CD4-positive, alpha-beta T cell (primary cell): ENCODE measurements at regions of chr21 and their contacts with region 1.

Region 1: GRCh38 chr21:33542640-33543504 is at the start of gene SON:
- DNase-seq: peak; percentile 94 to 99 (median 96)
- ATAC-seq: peak; percentile 89
- H3K4me3 ChIP-seq: peak within 1 kb of the TSS; percentile 91
- H3K4me3 Mint-ChIP-seq: peak within 1 kb of the TSS; percentile 95
- H3K27ac ChIP-seq: peak within 1 kb of the TSS; percentile 99 to 100
- H3K27ac Mint-ChIP-seq: peak within 1 kb of the TSS; percentile 98
- H3K4me1 ChIP-seq: peaks cover 15% of the 10 kb centered on the region
- H3K4me1 Mint-ChIP-seq: peaks cover 53% of the 10 kb centered on the region
- H3K27me3 ChIP-seq: no peaks in the 10 kb centered on the region
- H3K27me3 Mint-ChIP-seq: no peaks in the 10 kb centered on the region
- CTCF ChIP-seq: no peak
- total RNA-seq, gene SON: 420 to 438 TPM

Region 2: GRCh38 chr21:32727687-32728455 is 815.0 kb before region 1 on chr21 and contains the start of gene SYNJ1:
- CTCF ChIA-PET with region 1: no interaction called
- POLR2A ChIA-PET with region 1: interaction called, 12 read pairs
- intact Hi-C with region 1: loop called in 1 of 2 experiments (anchors 5 kb)
- DNase-seq: peak; percentile 85 to 97 (median 92)
- ATAC-seq: peak; percentile 85
- H3K4me3 ChIP-seq: peak within 1 kb of the TSS; percentile 95
- H3K4me3 Mint-ChIP-seq: peak within 1 kb of the TSS; percentile 97
- H3K27ac ChIP-seq: peak within 1 kb of the TSS; percentile 72 to 81
- H3K27ac Mint-ChIP-seq: peak within 1 kb of the TSS; percentile 90
- H3K4me1 ChIP-seq: peaks cover 27% of the 10 kb centered on the region
- H3K4me1 Mint-ChIP-seq: peaks cover 75% of the 10 kb centered on the region
- H3K27me3 ChIP-seq: no peaks in the 10 kb centered on the region
- H3K27me3 Mint-ChIP-seq: no peaks in the 10 kb centered on the region
- CTCF ChIP-seq: no peak
- total RNA-seq, gene SYNJ1: 14.3 to 15.6 TPM

Region 3: GRCh38 chr21:33324291-33325221 is 218.3 kb before region 1 on chr21 and contains the start of gene IFNAR1:
- CTCF ChIA-PET with region 1: no interaction called
- POLR2A ChIA-PET with region 1: interaction called, 13 read pairs
- intact Hi-C with region 1: no loop called
- DNase-seq: peak; percentile 98 to 100 (median 99)
- ATAC-seq: peak; percentile 87
- H3K4me3 ChIP-seq: peak within 1 kb of the TSS; percentile 90
- H3K4me3 Mint-ChIP-seq: no peak within 1 kb of the TSS
- H3K27ac ChIP-seq: peak within 1 kb of the TSS; percentile 95 to 99
- H3K27ac Mint-ChIP-seq: no peak within 1 kb of the TSS
- H3K4me1 ChIP-seq: peaks cover 29% of the 10 kb centered on the region
- H3K4me1 Mint-ChIP-seq: peaks cover 31% of the 10 kb centered on the region
- H3K27me3 ChIP-seq: no peaks in the 10 kb centered on the region
- H3K27me3 Mint-ChIP-seq: no peaks in the 10 kb centered on the region
- CTCF ChIP-seq: no peak
- total RNA-seq, gene IFNAR1: 20.4 to 26.8 TPM

Region 4: DNA sequence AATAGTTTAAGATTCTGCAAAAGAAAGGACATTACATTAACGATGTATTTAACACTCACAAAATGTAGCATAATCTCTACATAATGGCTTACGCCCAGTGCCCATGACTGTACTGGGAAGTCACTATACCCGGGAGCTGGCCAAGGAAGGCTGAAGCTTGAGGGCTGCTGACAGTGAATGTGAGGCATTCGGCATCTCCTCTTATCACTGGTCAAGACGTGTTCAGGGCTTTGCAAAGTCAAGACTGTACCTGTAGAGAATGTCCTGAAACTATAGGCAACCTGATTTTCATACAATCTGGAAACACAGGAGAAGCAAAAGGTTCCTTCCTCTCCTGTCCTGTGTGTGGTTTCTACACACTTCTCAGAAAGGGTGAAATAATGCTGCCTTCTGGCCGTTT is 152.4 kb before region 1 on chr21:
- CTCF ChIA-PET with region 1: no interaction called
- POLR2A ChIA-PET with region 1: no interaction called
- intact Hi-C with region 1: no loop called
- DNase-seq: no peak
- ATAC-seq: no peak
- H3K4me3 ChIP-seq: no peak overlapping the region
- H3K4me3 Mint-ChIP-seq: no peak overlapping the region
- H3K27ac ChIP-seq: no peak overlapping the region
- H3K27ac Mint-ChIP-seq: no peak overlapping the region
- H3K4me1 ChIP-seq: peaks cover 3% of the 10 kb centered on the region
- H3K4me1 Mint-ChIP-seq: peaks cover 3% of the 10 kb centered on the region
- H3K27me3 ChIP-seq: no peaks in the 10 kb centered on the region
- H3K27me3 Mint-ChIP-seq: no peaks in the 10 kb centered on the region
- CTCF ChIP-seq: no peak

Region 5: DNA sequence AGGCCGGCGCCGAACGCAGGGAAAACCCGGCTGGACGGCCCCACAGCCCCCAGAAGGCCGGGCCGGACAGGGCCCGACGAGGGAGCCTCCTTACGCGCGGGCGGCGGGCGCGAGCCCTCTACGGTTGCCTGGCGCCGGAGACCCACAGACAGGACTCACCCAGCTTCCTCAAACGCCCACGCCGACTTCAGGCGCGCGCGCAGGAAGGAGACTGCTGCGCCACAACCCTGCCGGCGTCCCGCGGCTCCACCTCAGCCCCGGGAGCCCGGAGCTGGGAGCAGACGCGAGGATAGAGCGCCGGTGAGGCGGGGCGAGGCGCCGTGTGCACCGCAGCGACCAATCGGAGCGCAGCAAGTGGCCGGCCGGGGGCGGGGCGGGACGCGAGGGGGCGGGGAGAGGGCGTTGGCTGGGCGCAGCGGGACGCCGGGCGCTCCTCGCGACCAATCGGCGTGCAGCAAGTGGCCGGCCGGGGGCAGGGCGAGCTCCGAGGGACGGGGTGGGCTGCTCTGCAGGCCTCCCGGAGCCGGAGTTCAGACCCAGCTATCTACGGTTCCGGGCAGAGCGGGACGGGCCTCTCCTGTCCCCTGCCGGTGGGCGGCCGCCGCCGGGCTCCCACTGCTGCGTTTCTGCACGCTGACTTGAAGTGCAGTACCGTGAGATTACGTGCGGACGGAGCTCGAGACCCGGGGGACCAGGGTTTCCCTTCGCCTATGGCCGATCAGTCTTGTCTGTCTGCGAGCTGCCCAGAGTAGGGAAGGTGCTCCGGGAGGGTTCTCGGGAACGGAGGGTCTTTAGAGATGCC is 63.0 kb before region 1 on chr21 and contains the start of gene TMEM50B:
- CTCF ChIA-PET with region 1: interaction called, 18 read pairs
- POLR2A ChIA-PET with region 1: interaction called, 132 read pairs
- intact Hi-C with region 1: loop called (anchors 1 to 2 kb)
- DNase-seq: peak; percentile 91 to 99 (median 96)
- ATAC-seq: peak; percentile 89
- H3K4me3 ChIP-seq: peak within 1 kb of the TSS; percentile 88
- H3K4me3 Mint-ChIP-seq: peak within 1 kb of the TSS; percentile 89
- H3K27ac ChIP-seq: peak within 1 kb of the TSS; percentile 80 to 90
- H3K27ac Mint-ChIP-seq: peak within 1 kb of the TSS; percentile 96
- H3K4me1 ChIP-seq: peaks cover 22% of the 10 kb centered on the region
- H3K4me1 Mint-ChIP-seq: peaks cover 19% of the 10 kb centered on the region
- H3K27me3 ChIP-seq: no peaks in the 10 kb centered on the region
- H3K27me3 Mint-ChIP-seq: no peaks in the 10 kb centered on the region
- CTCF ChIP-seq: peak; percentile 0
- total RNA-seq, gene TMEM50B: 38.4 to 40.3 TPM

Region 6: DNA sequence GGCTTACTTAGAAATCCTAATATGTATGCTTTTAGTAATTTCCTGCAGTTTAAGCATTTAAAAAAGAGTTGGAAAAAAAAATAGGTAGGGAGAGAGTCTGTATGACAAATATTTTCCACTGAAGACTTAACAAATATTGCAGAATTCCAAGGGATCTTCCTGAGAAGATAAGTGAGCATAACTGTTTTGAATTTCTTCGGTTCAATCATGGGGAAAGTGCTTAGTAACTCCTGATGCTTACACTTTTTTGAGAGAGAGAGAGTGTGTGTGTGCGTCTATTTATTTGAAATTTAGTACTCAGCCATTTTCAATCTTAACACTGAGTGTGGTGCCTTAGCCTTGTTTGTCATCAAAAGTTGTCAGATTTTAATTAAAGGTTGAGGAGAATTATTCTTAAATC is 18.5 kb after region 1 on chr21:
- CTCF ChIA-PET with region 1: interaction called, 10 read pairs
- POLR2A ChIA-PET with region 1: interaction called, 29 read pairs
- intact Hi-C with region 1: no loop called
- DNase-seq: no peak
- ATAC-seq: no peak
- H3K4me3 ChIP-seq: no peak overlapping the region
- H3K4me3 Mint-ChIP-seq: no peak overlapping the region
- H3K27ac ChIP-seq: no peak overlapping the region
- H3K27ac Mint-ChIP-seq: peak overlapping the region; percentile 2
- H3K4me1 ChIP-seq: peaks cover 3% of the 10 kb centered on the region
- H3K4me1 Mint-ChIP-seq: peaks cover 67% of the 10 kb centered on the region
- H3K27me3 ChIP-seq: no peaks in the 10 kb centered on the region
- H3K27me3 Mint-ChIP-seq: no peaks in the 10 kb centered on the region
- CTCF ChIP-seq: no peak

Region 7: GRCh38 chr21:33588485-33589335 is 45.8 kb after region 1 on chr21 and contains the start of gene DONSON:
- CTCF ChIA-PET with region 1: interaction called, 5 read pairs
- POLR2A ChIA-PET with region 1: interaction called, 52 read pairs
- intact Hi-C with region 1: loop called (anchors 2 to 5 kb)
- DNase-seq: peak; percentile 72 to 95 (median 84)
- ATAC-seq: peak; percentile 90
- H3K4me3 ChIP-seq: peak within 1 kb of the TSS; percentile 75
- H3K4me3 Mint-ChIP-seq: peak within 1 kb of the TSS; percentile 97
- H3K27ac ChIP-seq: peak within 1 kb of the TSS; percentile 4 to 42
- H3K27ac Mint-ChIP-seq: peak within 1 kb of the TSS; percentile 81
- H3K4me1 ChIP-seq: peaks cover 11% of the 10 kb centered on the region
- H3K4me1 Mint-ChIP-seq: peaks cover 10% of the 10 kb centered on the region
- H3K27me3 ChIP-seq: no peaks in the 10 kb centered on the region
- H3K27me3 Mint-ChIP-seq: no peaks in the 10 kb centered on the region
- CTCF ChIP-seq: no peak
- total RNA-seq, gene DONSON: 11.9 to 13.5 TPM